ENCODE measurements at regions of chr6 and their contacts with region 1.

Region 1: GRCh38 chr6:135535989-135536414 is 38.5 kb upstream of the AHI1 start:
- DNase-seq: peak; percentile 51 to 78 (median 69)
- H3K4me3 ChIP-seq: peak overlapping the region in 4 of 7 experiments; percentile 5 to 32 (median 21)
- H3K27ac ChIP-seq: no peak overlapping the region
- H3K4me1 ChIP-seq: peaks cover 0 to 6% (median 4%) of the 10 kb centered on the region in 4 experiments
- H3K27me3 ChIP-seq: no peaks in the 10 kb centered on the region

Region 2: GRCh38 chr6:135555550-135555949 is 19.5 kb after region 1 on chr6:
- CTCF ChIA-PET with region 1: interaction called, 14 read pairs
- POLR2A ChIA-PET with region 1: interaction called, 3 read pairs
- DNase-seq: peak; percentile 90 to 97 (median 95)
- H3K4me3 ChIP-seq: no peak overlapping the region
- H3K27ac ChIP-seq: no peak overlapping the region
- H3K4me1 ChIP-seq: peaks cover 3 to 14% (median 8%) of the 10 kb centered on the region in 4 experiments
- H3K27me3 ChIP-seq: no peaks in the 10 kb centered on the region

Region 3: DNA sequence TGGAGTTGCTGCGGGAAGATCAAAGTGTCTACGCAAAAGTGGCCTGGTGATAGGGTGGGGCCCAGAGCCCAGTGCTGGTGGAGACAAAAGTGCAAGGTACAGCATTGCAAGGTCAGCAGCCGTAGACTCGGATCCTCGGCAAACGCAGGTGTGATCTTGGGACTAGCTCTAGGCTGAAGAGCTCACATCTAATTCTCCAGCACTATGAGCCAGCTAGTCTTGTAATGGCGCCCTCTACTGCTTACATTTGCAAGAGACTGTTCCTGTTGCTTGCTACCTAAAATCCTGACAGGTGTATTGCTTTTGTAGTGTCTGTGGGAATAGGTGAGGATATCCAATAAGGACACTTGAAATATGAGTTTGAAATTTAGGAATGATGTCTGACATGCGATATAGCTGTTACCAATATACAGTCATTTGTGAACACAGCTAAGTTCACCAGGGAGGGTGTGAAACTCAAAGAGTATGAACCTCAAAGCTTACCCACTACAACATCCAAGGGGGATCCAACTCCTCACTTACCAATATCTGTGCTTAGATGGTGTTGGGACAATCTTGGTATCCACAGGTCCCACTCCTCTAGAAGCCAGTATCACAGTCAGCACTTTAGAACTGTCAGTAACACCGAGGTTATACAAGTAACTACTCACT is 373.9 kb after region 1 on chr6:
- CTCF ChIA-PET with region 1: interaction called, 18 read pairs
- POLR2A ChIA-PET with region 1: no interaction called
- DNase-seq: peak; percentile 76 to 84 (median 77)
- H3K4me3 ChIP-seq: no peak overlapping the region
- H3K27ac ChIP-seq: no peak overlapping the region
- H3K4me1 ChIP-seq: peaks cover 0 to 2% (median 0%) of the 10 kb centered on the region in 4 experiments
- H3K27me3 ChIP-seq: no peaks in the 10 kb centered on the region

Measured in common myeloid progenitor, CD34-positive (primary cell).